Heart left ventricle (tissue), 16 donors: ENCODE measurements at regions of chr18 and their contacts with region 1.

Region 1: DNA sequence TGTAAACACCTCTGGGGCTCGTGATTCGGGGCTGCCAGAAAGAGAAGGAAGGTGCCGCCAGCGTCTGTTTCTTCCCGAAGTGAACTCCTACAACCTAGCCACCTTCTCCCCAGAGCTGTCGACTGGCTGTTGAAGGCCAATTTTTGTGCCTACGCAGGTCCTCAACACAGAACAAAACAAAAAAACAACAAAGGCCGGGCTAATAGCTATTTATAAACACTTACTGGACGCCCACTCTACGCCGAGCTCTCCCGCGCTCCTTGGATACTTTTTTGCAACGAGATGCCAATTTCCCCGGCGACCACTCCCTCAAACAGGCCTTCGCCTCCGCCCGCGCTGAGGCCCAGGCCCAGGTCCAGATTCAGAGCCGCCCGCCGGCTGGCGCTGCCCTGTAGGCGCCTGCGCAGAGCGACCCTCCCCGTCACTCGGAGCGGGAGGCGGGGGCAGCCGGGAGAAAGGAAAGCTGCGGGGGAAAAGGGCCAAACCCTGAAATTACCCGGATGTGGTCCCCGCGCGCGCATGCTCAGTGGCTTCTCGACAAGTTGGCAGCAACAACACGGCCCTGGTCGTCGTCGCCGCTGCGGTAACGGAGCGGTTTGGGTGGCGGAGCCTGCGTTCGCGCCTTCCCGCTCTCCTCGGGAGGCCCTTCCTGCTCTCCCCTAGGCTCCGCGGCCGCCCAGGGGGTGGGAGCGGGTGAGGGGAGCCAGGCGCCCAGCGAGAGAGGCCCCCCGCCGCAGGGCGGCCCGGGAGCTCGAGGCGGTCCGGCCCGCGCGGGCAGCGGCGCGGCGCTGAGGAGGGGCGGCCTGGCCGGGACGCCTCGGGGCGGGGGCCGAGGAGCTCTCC is at the start of gene SMAD4:
- DNase-seq: peak; percentile 96 to 99 (median 97)
- ATAC-seq: peak; percentile 95 to 98 (median 96)
- H3K4me3 ChIP-seq: peak within 1 kb of the TSS; percentile 54 to 97 (median 79)
- H3K27ac ChIP-seq: peak within 1 kb of the TSS; percentile 92 to 99 (median 98)
- H3K4me1 ChIP-seq: peaks cover 11 to 75% (median 46%) of the 10 kb centered on the region in 12 donors
- H3K27me3 ChIP-seq: no peaks in the 10 kb centered on the region
- CTCF ChIP-seq: peak in 1 of 12 donors; percentile 13
- POLR2A ChIP-seq: peak in 1 of 2 donors; percentile 86
- total RNA-seq, gene SMAD4: 78.6 to 103 (median 92.0) TPM

Region 2: DNA sequence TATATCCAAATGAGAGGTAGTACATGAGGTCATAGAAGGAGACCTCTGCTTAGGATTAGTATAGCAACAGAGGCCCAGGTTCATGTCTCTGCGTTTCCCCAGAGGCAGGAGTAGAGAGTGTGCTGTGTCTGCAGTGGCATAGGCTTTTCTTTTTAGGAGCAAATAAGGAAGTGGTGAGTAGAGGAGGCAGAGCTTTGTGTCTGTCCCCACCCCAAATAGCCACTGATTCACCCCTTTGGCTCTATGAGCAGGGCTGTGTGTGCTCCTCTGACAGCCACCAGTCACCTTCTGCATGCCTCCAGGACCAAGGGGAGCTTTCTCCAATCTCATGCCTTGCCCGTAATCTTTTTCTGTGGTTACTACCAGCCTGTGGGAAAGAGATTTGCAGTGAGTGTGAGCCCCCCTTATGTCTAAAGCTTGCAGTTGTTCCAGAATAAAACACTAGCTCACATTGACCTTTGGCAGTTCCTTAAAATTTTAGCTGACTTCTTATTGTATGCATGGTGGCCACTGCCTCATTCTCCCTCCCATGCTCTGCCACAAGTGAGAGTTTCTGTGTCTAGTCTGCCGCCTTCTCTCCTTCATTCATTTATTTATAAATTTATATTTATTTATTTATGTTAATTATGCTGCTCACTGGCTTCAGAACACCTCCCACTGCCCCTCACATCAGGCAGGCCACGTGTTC is 85.5 kb before region 1 on chr18:
- intact Hi-C with region 1: no loop called
- DNase-seq: no peak
- ATAC-seq: peak in 3 of 4 donors; percentile 61 to 88 (median 72)
- H3K4me3 ChIP-seq: no peak overlapping the region
- H3K27ac ChIP-seq: peak overlapping the region in 1 of 12 donors; percentile 32
- H3K4me1 ChIP-seq: peaks cover 0 to 4% (median 0%) of the 10 kb centered on the region in 12 donors
- H3K27me3 ChIP-seq: no peaks in the 10 kb centered on the region
- CTCF ChIP-seq: no peak
- POLR2A ChIP-seq: no peak

Region 3: DNA sequence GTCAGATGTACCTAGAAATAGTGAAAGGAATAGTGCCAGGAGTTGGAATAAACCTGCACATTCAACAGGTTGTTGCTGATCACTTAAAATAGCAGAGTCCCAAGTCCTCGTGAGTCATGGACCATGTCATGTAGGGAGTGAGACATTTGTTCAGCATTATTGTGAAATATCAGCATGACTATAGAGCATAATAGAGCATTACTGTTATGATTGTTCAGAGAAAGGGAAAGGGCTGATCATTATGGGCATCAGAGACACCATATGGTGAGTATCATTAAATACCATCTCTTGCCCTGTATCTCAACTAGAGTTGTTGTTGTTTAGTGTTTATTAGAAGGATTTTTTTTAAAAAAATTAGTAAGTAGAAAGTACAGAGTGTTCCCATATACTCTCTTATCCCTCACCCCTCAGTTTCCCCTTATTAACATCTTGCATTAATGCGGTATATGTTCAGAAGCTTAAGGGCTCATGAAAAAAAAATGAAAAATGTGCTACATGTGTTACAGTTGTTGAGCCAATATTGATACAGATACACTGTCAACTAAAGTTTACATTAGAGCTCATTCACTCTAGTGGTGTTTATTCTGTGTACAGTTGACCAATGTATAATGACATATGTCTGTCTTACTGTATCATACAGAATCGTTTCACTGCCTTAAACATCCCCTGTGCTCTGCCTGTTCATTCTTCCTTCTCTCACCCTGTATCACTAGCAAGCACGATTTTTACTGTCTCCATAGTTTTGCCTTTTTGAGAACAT is 56.4 kb before region 1 on chr18:
- intact Hi-C with region 1: loop called in 8 of 10 experiments (anchors 2 to 10 kb)
- DNase-seq: no peak
- ATAC-seq: peak in 3 of 4 donors; percentile 58 to 87 (median 76)
- H3K4me3 ChIP-seq: no peak overlapping the region
- H3K27ac ChIP-seq: no peak overlapping the region
- H3K4me1 ChIP-seq: peaks cover 0 to 28% (median 16%) of the 10 kb centered on the region in 12 donors
- H3K27me3 ChIP-seq: no peaks in the 10 kb centered on the region
- CTCF ChIP-seq: no peak
- POLR2A ChIP-seq: no peak

Region 4: DNA sequence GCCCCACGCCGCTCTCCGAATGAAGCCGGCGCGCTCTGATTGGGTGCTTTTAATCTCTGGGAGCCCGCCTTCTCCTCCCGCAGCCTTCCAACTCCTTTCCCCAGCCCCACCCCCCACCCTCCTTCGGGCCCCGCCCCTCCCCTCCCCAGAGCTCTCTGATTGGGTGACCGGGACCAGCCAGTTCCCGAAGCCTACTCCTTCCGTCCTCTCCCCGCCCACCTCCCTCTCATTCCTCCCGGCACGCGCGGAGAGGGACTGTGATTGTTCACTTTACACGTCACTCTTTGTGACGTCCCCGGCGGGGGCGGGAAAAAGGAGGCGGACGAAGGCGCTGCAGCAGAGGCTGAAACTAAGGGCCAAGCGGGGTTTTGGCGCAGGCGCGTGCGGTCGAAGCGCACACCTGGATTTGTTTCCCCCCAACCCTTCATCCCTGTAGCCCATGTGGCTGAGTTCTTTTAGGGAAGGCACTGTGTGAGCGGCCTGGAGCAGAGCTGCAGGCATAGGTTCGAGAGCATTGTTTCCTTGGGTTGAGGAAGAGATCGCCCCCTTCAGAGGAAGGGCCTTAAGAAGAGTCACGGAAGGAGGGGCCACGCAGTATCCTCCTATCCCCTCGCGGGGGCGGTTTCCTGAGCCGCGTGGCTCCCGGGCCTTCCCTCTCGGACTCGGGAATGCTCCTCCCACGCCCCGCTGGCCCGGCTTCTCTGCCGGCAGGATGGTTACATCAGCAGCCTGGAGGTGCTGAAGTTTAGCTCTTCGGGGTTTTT is 167.9 kb after region 1 on chr18 and contains the start of gene MEX3C:
- intact Hi-C with region 1: loop called in 2 of 10 experiments (anchors 5 to 10 kb)
- DNase-seq: peak; percentile 99 to 100 (median 99)
- ATAC-seq: peak; percentile 95 to 97 (median 97)
- H3K4me3 ChIP-seq: peak within 1 kb of the TSS; percentile 64 to 99 (median 88)
- H3K27ac ChIP-seq: peak within 1 kb of the TSS; percentile 92 to 99 (median 96)
- H3K4me1 ChIP-seq: peaks cover 1 to 29% (median 26%) of the 10 kb centered on the region in 12 donors
- H3K27me3 ChIP-seq: no peaks in the 10 kb centered on the region
- CTCF ChIP-seq: peak in 11 of 12 donors; percentile 15 to 68 (median 37)
- POLR2A ChIP-seq: peak in 1 of 2 donors; percentile 43
- total RNA-seq, gene MEX3C: 15.1 to 28.2 (median 20.7) TPM